ENCODE measurements at regions of chr1 and their contacts with region 1.

Region 1: DNA sequence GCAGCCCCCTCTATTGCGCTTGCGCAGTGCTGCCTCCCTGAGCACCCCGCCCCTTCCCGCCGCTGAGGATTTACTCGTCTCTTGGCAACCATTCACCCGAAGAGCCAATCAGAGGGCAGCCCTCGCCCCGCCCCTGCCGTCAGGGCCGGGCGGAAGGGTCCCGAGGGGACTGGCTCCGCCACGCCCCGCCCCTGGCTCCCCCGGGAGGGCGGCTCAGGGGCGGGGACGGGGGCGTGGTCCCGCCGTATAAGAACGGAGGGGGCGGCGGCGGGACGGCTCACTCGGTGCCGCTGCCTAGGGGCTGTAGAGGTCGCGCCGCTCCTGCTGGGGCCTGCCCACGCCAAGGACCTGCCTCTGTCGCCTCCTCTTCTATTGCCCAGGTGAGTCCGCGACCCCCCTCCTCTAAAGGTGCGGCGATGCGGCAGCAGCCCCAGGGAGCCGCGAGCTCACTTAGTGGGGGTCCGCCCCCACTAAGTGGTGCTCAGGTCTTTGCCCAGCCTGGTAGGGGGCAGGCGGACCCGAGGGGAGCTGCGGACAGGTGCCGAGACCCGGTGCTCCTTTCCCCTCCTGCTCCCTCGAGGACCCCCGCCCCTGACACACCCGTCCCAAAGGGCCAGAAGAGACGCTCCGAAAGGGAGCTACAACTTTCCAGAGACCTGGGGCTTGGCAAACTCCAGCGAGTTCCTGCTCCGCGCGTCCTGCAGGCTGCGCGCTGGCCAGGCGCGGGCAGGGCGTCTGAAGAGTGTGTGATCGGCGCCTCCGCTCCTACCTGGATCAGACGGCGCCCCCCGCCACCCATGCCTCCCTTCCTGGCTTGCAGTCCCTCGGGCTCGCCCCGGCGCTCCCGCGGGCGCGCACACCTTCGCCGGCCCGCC is at the start of gene TENT5C:
- DNase-seq: peak; percentile 97
- H3K4me3 Mint-ChIP-seq: peak within 1 kb of the TSS; percentile 97
- H3K27ac Mint-ChIP-seq: peak within 1 kb of the TSS; percentile 81
- H3K4me1 Mint-ChIP-seq: peaks cover 42% of the 10 kb centered on the region
- H3K27me3 Mint-ChIP-seq: peaks cover 29% of the 10 kb centered on the region
- total RNA-seq, gene TENT5C: 11.2 and 11.6 TPM in 2 replicates

Region 2: GRCh38 chr1:116372587-116373444 is 1233.2 kb before region 1 on chr1 and contains the start of gene ATP1A1:
- intact Hi-C with region 1: loop called (anchors 10 kb)
- DNase-seq: peak; percentile 95
- H3K4me3 Mint-ChIP-seq: peak within 1 kb of the TSS; percentile 95
- H3K27ac Mint-ChIP-seq: peak within 1 kb of the TSS; percentile 87
- H3K4me1 Mint-ChIP-seq: peaks cover 34% of the 10 kb centered on the region
- H3K27me3 Mint-ChIP-seq: peaks cover 28% of the 10 kb centered on the region
- total RNA-seq, gene ATP1A1: 196 and 200 TPM in 2 replicates

Region 3: DNA sequence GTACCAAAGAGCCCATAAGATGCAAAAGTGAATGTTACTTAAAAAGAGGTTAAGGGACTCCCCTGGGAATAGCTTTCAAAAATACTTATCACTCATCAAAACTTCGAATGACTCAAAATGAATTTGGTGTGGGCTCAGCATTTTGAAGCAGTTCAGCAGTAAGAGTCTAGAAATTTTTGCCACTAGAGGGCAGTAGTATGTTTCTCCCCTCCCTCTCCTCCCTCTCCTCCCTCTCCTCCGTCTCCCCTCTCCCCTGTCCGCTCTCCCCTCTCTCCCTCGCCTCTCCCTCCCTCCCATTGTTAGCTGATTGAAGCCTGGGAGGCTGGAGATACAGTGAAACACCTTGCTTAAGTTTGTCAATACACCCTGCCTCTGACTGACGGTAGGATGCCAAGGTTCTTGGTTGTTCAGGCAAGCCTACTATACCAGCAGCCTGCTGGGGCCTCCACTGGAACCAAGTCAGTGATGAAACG is 71.0 kb before region 1 on chr1:
- intact Hi-C with region 1: loop called (anchors 1 kb)
- DNase-seq: peak; percentile 25
- H3K4me3 Mint-ChIP-seq: no peak overlapping the region
- H3K27ac Mint-ChIP-seq: no peak overlapping the region
- H3K4me1 Mint-ChIP-seq: peaks cover 12% of the 10 kb centered on the region
- H3K27me3 Mint-ChIP-seq: no peaks in the 10 kb centered on the region

Region 4: GRCh38 chr1:117654493-117655219 is 48.6 kb after region 1 on chr1:
- intact Hi-C with region 1: loop called (anchors 1 kb)
- DNase-seq: no peak
- H3K4me3 Mint-ChIP-seq: peak overlapping the region; percentile 28
- H3K27ac Mint-ChIP-seq: peak overlapping the region; percentile 84
- H3K4me1 Mint-ChIP-seq: peaks cover 80% of the 10 kb centered on the region
- H3K27me3 Mint-ChIP-seq: peaks cover 7% of the 10 kb centered on the region

Region 5: GRCh38 chr1:117695796-117696490 is 89.9 kb after region 1 on chr1:
- intact Hi-C with region 1: no loop called
- DNase-seq: no peak
- H3K4me3 Mint-ChIP-seq: no peak overlapping the region
- H3K27ac Mint-ChIP-seq: no peak overlapping the region
- H3K4me1 Mint-ChIP-seq: no peaks in the 10 kb centered on the region
- H3K27me3 Mint-ChIP-seq: peaks cover 26% of the 10 kb centered on the region

Region 6: DNA sequence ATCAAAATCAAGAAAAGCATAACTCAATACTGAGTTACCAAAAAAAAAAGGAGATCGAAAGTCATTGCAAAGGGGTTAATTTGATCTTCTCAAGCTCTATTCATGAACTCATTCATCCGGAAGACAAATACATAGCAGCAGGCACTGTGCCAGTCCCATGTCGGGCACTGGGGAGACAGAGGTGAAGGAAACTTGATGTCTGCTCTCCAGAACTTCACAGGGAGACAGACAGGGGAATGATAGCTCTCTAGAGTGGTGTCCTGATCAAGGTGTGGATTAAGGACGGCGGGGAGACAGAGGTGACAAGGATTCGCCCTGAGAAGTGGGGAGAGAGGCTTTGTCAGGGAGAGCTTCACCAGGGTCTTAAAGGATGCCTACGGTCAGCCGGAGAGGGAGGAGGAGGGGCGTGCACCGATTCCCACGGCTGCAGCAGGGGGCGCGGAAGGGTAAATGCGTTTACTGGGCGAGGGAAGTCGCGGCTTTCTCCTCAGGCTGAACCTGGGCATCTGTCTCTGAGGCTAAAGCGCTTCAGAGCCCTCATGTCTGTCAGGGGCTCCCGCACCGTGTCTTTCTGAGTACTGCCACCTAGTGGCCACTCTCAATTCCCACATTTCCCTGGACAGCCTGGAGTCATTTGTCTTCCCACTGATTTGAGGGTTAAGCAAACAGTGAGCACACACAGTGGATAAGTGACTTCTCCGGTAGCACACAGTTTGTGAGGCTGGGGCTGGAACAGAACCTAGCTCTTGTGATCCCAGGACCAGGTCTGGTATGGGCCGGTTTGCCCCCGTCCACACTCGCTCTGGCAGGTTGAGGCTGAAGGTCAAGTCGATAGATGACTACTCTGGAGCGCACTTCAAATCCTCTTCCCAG is 152.7 kb after region 1 on chr1:
- intact Hi-C with region 1: loop called (anchors 2 kb)
- DNase-seq: peak; percentile 60
- H3K4me3 Mint-ChIP-seq: peak overlapping the region; percentile 75
- H3K27ac Mint-ChIP-seq: no peak overlapping the region
- H3K4me1 Mint-ChIP-seq: peaks cover 10% of the 10 kb centered on the region
- H3K27me3 Mint-ChIP-seq: peaks cover 37% of the 10 kb centered on the region

Region 7: GRCh38 chr1:117929173-117929989 is 323.4 kb after region 1 on chr1 and contains the starts of genes GDAP2 and WDR3:
- intact Hi-C with region 1: loop called (anchors 5 kb)
- DNase-seq: peak; percentile 95
- H3K4me3 Mint-ChIP-seq: peak within 1 kb of the TSS; percentile 93
- H3K27ac Mint-ChIP-seq: peak within 1 kb of the TSS; percentile 80
- H3K4me1 Mint-ChIP-seq: peaks cover 39% of the 10 kb centered on the region
- H3K27me3 Mint-ChIP-seq: peaks cover 1% of the 10 kb centered on the region
- total RNA-seq, gene GDAP2: 19.7 and 25.3 TPM in 2 replicates
- total RNA-seq, gene WDR3: 54.2 and 55.5 TPM in 2 replicates

Measured in activated T-helper 2 cell treated with anti-CD3 and anti-CD28 coated beads, Interferon-gamma antibody, Interleukin-2, Interleukin-4, amounts not matched to agents 10 μg/mL and 5 μg/mL and 100 μg/mL, durations not matched to agents 14 hours and 24 hours and 36 hours (primary cell).